ENCODE measurements at regions of chr5 and their contacts with region 1.

Region 1: GRCh38 chr5:170267431-170268152 is 30.0 kb downstream of the LCP2 start:
- DNase-seq: peak; percentile 42
- H3K4me3 ChIP-seq: no peak overlapping the region
- H3K27ac ChIP-seq: no peak overlapping the region
- H3K4me1 ChIP-seq: no peaks in the 10 kb centered on the region
- H3K27me3 ChIP-seq: peaks cover 7% of the 10 kb centered on the region
- CTCF ChIP-seq: peak; percentile 85 to 87

Region 2: GRCh38 chr5:170338933-170339779 is 71.6 kb after region 1 on chr5:
- CTCF ChIA-PET with region 1: no interaction called
- dilution Hi-C with region 1: no loop called
- in situ Hi-C with region 1: no loop called
- intact Hi-C with region 1: loop called (anchors 1 kb)
- DNase-seq: no peak
- H3K4me3 ChIP-seq: no peak overlapping the region
- H3K27ac ChIP-seq: no peak overlapping the region
- H3K4me1 ChIP-seq: no peaks in the 10 kb centered on the region
- H3K27me3 ChIP-seq: no peaks in the 10 kb centered on the region
- CTCF ChIP-seq: peak; percentile 45 to 54

Region 3: GRCh38 chr5:170353011-170353761 is 85.6 kb after region 1 on chr5:
- CTCF ChIA-PET with region 1: no interaction called
- dilution Hi-C with region 1: no loop called
- in situ Hi-C with region 1: no loop called
- intact Hi-C with region 1: no loop called
- DNase-seq: no peak
- H3K4me3 ChIP-seq: no peak overlapping the region
- H3K27ac ChIP-seq: no peak overlapping the region
- H3K4me1 ChIP-seq: no peaks in the 10 kb centered on the region
- H3K27me3 ChIP-seq: no peaks in the 10 kb centered on the region
- CTCF ChIP-seq: no peak

Region 4: GRCh38 chr5:170420780-170421412 is 153.3 kb after region 1 on chr5:
- CTCF ChIA-PET with region 1: no interaction called
- dilution Hi-C with region 1: no loop called
- in situ Hi-C with region 1: loop called in 1 of 2 experiments (anchors 10 kb)
- intact Hi-C with region 1: loop called (anchors 1 kb)
- DNase-seq: peak; percentile 34
- H3K4me3 ChIP-seq: no peak overlapping the region
- H3K27ac ChIP-seq: no peak overlapping the region
- H3K4me1 ChIP-seq: no peaks in the 10 kb centered on the region
- H3K27me3 ChIP-seq: no peaks in the 10 kb centered on the region
- CTCF ChIP-seq: peak; percentile 64 to 78

Region 5: DNA sequence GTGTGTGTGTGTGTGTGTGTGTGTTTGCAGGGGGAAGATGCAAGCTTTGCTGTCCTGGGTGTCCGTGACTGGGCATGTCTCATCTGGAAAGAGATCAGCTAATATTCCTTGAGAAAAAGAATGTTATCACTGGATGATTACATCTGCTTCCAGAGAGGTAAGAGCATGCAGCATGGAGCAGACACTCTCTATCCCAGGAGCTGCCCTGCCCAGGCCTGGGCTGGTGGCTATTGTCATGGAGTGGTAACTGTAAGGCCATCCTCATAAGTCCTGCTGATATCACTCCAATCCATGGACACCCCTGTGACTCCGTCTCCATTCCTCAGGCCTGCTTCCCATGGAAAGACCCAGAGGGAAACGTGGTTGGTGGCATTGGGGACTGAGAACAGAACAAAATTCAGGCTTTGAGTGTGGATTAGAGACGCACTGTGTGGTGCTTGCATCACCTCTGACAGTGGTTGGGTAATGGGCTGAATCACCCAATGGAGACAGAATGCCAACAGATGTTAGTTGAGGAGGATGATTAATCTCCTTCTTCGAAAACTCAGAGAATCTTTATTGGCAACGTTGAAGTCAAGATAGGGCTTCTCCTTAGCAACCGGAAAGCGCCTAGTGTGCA is 184.3 kb after region 1 on chr5:
- CTCF ChIA-PET with region 1: no interaction called
- dilution Hi-C with region 1: no loop called
- in situ Hi-C with region 1: no loop called
- intact Hi-C with region 1: no loop called
- DNase-seq: peak; percentile 64
- H3K4me3 ChIP-seq: no peak overlapping the region
- H3K27ac ChIP-seq: no peak overlapping the region
- H3K4me1 ChIP-seq: no peaks in the 10 kb centered on the region
- H3K27me3 ChIP-seq: no peaks in the 10 kb centered on the region
- CTCF ChIP-seq: no peak

Region 6: GRCh38 chr5:170603578-170604565 is 336.3 kb after region 1 on chr5:
- CTCF ChIA-PET with region 1: no interaction called
- dilution Hi-C with region 1: no loop called
- in situ Hi-C with region 1: loop called in 1 of 2 experiments (anchors 25 kb)
- intact Hi-C with region 1: no loop called
- DNase-seq: peak; percentile 24
- H3K4me3 ChIP-seq: no peak overlapping the region
- H3K27ac ChIP-seq: no peak overlapping the region
- H3K4me1 ChIP-seq: no peaks in the 10 kb centered on the region
- H3K27me3 ChIP-seq: peaks cover 2% of the 10 kb centered on the region
- CTCF ChIP-seq: peak; percentile 59 to 78

Region 7: GRCh38 chr5:170623576-170624181 is 356.1 kb after region 1 on chr5:
- CTCF ChIA-PET with region 1: no interaction called
- dilution Hi-C with region 1: no loop called
- in situ Hi-C with region 1: loop called in 1 of 2 experiments (anchors 25 kb)
- intact Hi-C with region 1: loop called (anchors 1 kb)
- DNase-seq: peak; percentile 15
- H3K4me3 ChIP-seq: no peak overlapping the region
- H3K27ac ChIP-seq: no peak overlapping the region
- H3K4me1 ChIP-seq: no peaks in the 10 kb centered on the region
- H3K27me3 ChIP-seq: no peaks in the 10 kb centered on the region
- CTCF ChIP-seq: peak; percentile 76 to 82

Measured in mammary epithelial cell (primary cell).